WTC11 (cell line): ENCODE measurements at regions of chr10 and their contacts with region 1.

Region 1: DNA sequence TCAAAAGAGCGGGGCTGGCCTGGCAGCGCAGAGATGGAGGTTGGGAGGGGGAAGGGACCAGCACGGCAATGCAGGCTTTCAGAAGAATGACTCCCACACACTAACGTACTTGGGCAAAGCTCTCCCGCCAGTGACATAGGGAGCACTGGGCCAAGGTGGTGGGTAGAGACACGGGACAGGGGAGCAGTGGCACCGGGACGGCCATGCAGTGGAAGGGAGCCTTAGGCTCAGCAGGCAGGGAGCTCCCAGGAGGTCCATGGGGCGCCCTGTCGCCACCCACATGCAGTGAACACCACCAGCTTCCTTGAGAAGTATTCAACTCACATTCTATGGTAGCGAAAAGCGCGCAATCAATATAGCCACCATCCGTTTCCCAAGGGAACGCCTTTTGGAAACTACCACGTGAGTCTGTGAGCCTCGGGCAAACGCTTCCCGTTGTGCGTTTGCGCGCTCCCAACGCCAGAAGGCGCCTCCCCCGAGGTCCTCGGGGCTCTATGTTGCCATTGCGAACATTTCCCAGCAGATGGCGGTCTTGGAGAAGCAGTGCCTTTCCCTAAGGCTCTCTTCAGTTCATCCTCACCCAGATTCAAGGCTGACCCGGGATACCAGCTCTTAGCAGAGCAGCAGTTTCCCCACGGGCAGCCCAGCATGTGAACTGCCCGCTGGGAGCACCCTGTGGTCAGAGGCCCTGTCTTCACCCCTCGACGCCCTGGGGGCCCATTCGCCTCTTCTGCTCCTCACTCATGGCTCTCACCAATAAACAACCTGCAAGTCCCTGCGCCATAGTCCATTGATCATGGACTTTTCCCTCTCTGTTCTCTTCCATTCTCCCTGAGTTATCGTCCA is 16.4 kb upstream of the OPALIN start:
- DNase-seq: peak; percentile 92
- ATAC-seq: peak; percentile 86
- H3K4me3 Mint-ChIP-seq: peak overlapping the region; percentile 67
- H3K27ac Mint-ChIP-seq: no peak overlapping the region
- H3K4me1 Mint-ChIP-seq: peaks cover 23% of the 10 kb centered on the region
- H3K27me3 Mint-ChIP-seq: peaks cover 7% of the 10 kb centered on the region
- CTCF ChIP-seq: peak; percentile 78

Region 2: DNA sequence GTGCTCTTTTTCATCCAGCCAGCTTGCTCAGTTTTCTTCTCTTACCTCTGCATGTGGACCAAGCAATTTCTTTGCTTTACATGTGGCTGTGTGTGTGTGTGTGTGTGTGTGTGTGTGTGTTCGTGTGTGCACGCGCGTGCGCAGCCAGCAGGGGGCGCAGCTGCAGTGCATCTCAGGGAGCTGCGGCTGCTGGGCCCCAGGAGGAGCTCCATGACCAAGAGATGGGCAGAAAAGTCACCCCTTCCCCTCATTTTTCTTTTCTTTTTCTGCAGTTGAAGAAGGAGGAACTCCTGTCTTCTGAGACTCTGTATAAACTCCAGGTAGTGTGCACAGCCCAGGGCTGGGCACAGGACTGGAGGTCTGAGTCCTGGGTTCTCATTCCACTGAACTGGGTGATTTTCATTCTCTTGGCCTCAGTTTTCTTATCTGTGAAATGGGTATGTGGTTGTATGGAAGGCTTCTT is 145.6 kb before region 1 on chr10:
- CTCF ChIA-PET with region 1: interaction called, 19 read pairs
- POLR2A ChIA-PET with region 1: no interaction called
- DNase-seq: peak; percentile 88
- ATAC-seq: peak; percentile 71
- H3K4me3 Mint-ChIP-seq: no peak overlapping the region
- H3K27ac Mint-ChIP-seq: no peak overlapping the region
- H3K4me1 Mint-ChIP-seq: peaks cover 12% of the 10 kb centered on the region
- H3K27me3 Mint-ChIP-seq: no peaks in the 10 kb centered on the region; the same call in 1 of the 2 replicates
- CTCF ChIP-seq: peak; percentile 77; the same call in 1 of the 2 replicates

Region 3: GRCh38 chr10:96358851-96359540 is 16.2 kb before region 1 on chr10 and contains the start of gene OPALIN:
- CTCF ChIA-PET with region 1: interaction called, 31 read pairs
- POLR2A ChIA-PET with region 1: no interaction called
- DNase-seq: no peak
- ATAC-seq: no peak
- H3K4me3 Mint-ChIP-seq: no peak within 1 kb of the TSS
- H3K27ac Mint-ChIP-seq: no peak within 1 kb of the TSS
- H3K4me1 Mint-ChIP-seq: peaks cover 5% of the 10 kb centered on the region; the same call in 1 of the 2 replicates
- H3K27me3 Mint-ChIP-seq: no peaks in the 10 kb centered on the region; the same call in 1 of the 2 replicates
- CTCF ChIP-seq: no peak
- total RNA-seq, gene OPALIN: 0.04 TPM in 1 of 3 replicates, not detected in the others

Region 4: GRCh38 chr10:96416643-96417042 is 41.4 kb after region 1 on chr10:
- CTCF ChIA-PET with region 1: interaction called, 25 read pairs
- POLR2A ChIA-PET with region 1: no interaction called
- DNase-seq: no peak
- ATAC-seq: no peak
- H3K4me3 Mint-ChIP-seq: no peak overlapping the region
- H3K27ac Mint-ChIP-seq: no peak overlapping the region
- H3K4me1 Mint-ChIP-seq: peaks cover 8% of the 10 kb centered on the region; the same call in 1 of the 2 replicates
- H3K27me3 Mint-ChIP-seq: no peaks in the 10 kb centered on the region
- CTCF ChIP-seq: no peak

Region 5: GRCh38 chr10:96513698-96514561 is 138.7 kb after region 1 on chr10 and contains the start of gene TLL2:
- CTCF ChIA-PET with region 1: interaction called, 240 read pairs
- POLR2A ChIA-PET with region 1: interaction called, 3 read pairs
- DNase-seq: peak; percentile 95
- ATAC-seq: peak; percentile 88
- H3K4me3 Mint-ChIP-seq: peak within 1 kb of the TSS; percentile 77
- H3K27ac Mint-ChIP-seq: no peak within 1 kb of the TSS
- H3K4me1 Mint-ChIP-seq: peaks cover 43% of the 10 kb centered on the region
- H3K27me3 Mint-ChIP-seq: peaks cover 39% of the 10 kb centered on the region
- CTCF ChIP-seq: no peak
- total RNA-seq, gene TLL2: 9.1 to 9.2 TPM (median 9.1 TPM) in 3 replicates

Region 6: DNA sequence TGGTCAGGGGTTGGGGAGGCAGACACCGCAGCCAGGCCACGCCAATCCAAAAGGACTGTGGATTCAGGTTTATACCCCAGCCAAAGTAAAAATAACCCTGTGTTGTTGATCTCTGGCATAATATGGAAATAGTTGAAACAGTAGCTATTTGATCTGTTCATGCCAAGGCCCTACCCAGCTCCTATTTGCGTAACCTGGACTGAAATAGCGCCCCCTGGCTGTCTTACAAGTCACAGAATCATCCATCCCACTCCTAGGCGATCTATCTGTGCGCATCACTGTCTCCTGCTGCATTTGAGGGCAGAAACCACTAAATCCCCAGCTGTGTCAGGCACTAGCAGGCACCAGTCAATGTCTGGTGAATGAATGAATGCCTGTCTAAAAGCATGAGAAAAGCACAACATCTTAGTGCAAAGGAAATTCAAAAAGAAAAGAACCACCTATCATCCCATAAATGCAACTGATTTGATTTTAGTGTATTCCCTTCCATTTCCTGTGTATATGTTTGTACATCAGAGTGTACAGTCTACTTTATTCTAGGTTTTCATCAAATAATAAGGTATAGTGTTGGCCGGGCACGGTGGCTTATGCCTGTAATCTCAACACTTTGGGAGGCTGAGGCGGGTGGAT is 650.5 kb after region 1 on chr10:
- CTCF ChIA-PET with region 1: interaction called, 14 read pairs
- POLR2A ChIA-PET with region 1: no interaction called
- DNase-seq: peak; percentile 69
- ATAC-seq: peak; percentile 92
- H3K4me3 Mint-ChIP-seq: no peak overlapping the region
- H3K27ac Mint-ChIP-seq: no peak overlapping the region
- H3K4me1 Mint-ChIP-seq: peaks cover 8% of the 10 kb centered on the region
- H3K27me3 Mint-ChIP-seq: no peaks in the 10 kb centered on the region
- CTCF ChIP-seq: peak; percentile 88